Endothelial cell of umbilical vein (primary cell): ENCODE measurements at regions of chr1 and their contacts with region 1.

Region 1: DNA sequence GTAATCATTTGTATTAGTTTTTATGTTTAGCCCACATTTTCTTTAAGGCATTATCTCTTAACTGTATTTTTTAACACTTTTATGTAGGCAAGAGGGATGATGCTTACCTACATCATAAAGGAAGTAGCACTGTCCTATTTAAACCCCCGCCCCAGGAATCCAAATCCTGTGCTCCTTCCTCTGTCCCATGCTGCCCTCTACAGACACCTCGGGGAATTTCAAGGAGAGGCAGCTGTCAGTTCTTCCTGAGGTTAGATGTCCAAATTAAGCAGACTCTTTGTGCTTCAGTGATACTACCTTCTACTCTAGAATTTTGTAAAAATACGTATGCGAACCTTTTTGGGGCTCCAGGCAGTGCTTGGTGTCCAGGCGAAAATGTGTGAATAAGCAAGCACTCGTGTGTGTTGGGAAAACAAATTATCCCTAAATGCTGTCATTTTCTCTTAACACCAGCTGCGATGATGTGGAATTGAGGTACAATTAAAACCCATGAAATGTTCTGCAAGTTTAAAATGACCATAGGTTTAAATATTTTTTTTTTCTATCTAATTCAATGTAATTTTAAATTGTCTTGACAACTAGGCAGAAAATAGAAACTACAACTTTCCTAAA is 19.2 kb downstream of the CRCT1 start:
- DNase-seq: peak; percentile 36
- H3K4me3 ChIP-seq: no peak overlapping the region
- H3K27ac ChIP-seq: no peak overlapping the region
- H3K4me1 ChIP-seq: no peaks in the 10 kb centered on the region
- H3K27me3 ChIP-seq: no peaks in the 10 kb centered on the region
- CTCF ChIP-seq: peak; percentile 51 to 62
- POLR2A ChIP-seq: no peak

Region 2: GRCh38 chr1:152486400-152487006 is 46.9 kb before region 1 on chr1:
- CTCF ChIA-PET with region 1: interaction called, 40 read pairs
- POLR2A ChIA-PET with region 1: no interaction called
- dilution Hi-C with region 1: no loop called
- intact Hi-C with region 1: no loop called
- DNase-seq: no peak
- H3K4me3 ChIP-seq: no peak overlapping the region
- H3K27ac ChIP-seq: no peak overlapping the region
- H3K4me1 ChIP-seq: no peaks in the 10 kb centered on the region
- H3K27me3 ChIP-seq: no peaks in the 10 kb centered on the region
- CTCF ChIP-seq: peak; percentile 36 to 39
- POLR2A ChIP-seq: no peak

Region 3: GRCh38 chr1:152495066-152495675 is 38.3 kb before region 1 on chr1:
- CTCF ChIA-PET with region 1: interaction called, 181 read pairs
- POLR2A ChIA-PET with region 1: no interaction called
- dilution Hi-C with region 1: no loop called
- intact Hi-C with region 1: loop called (anchors 1 kb)
- DNase-seq: peak; percentile 21
- H3K4me3 ChIP-seq: no peak overlapping the region
- H3K27ac ChIP-seq: no peak overlapping the region
- H3K4me1 ChIP-seq: no peaks in the 10 kb centered on the region
- H3K27me3 ChIP-seq: no peaks in the 10 kb centered on the region
- CTCF ChIP-seq: peak; percentile 30 to 59
- POLR2A ChIP-seq: no peak

Region 4: DNA sequence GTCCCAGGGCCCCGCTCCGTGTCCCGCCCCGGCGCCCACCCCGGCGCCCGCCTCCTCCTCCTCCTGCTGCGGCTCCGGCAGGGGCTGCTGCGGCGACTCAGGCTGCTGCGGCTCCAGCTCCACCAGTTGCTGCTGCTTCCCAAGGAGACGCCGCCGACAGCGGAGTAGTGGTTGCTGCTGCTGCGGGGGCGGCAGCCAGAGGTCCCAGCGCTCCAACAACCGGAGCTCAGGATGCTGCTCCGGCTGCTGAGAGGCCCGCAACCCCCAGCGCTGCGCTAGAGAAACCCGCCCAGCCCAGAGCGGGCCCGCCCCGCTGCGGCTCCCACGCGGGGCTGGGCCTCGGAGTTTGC is 18.0 kb before region 1 on chr1:
- CTCF ChIA-PET with region 1: interaction called, 17 read pairs
- POLR2A ChIA-PET with region 1: no interaction called
- dilution Hi-C with region 1: no loop called
- intact Hi-C with region 1: no loop called
- DNase-seq: no peak
- H3K4me3 ChIP-seq: no peak overlapping the region
- H3K27ac ChIP-seq: no peak overlapping the region
- H3K4me1 ChIP-seq: peaks cover 4% of the 10 kb centered on the region
- H3K27me3 ChIP-seq: peaks cover 15 to 16% of the 10 kb centered on the region in 2 experiments
- CTCF ChIP-seq: no peak
- POLR2A ChIP-seq: no peak

Region 5: DNA sequence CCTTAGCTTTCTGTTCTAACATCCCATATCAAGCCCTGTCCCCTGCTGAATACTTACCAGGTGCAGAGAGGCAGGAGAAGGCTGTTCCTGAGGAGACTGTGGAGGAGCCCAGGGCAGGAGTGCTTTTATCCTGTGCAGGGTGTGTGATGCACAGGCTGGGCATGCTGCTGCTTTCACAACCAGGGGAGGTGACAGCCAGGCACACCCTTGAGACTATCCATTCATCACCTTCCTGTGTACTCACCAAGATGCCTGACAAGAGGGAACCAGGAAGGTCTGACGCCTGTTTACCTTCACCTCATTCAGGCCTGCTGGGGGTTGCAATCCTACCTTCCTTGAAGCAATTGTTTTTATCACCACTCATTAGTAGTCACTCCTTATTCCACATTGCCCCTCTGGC is 33.2 kb after region 1 on chr1 and contains the start of gene LCE3E:
- CTCF ChIA-PET with region 1: no interaction called
- POLR2A ChIA-PET with region 1: no interaction called
- dilution Hi-C with region 1: no loop called
- intact Hi-C with region 1: no loop called
- DNase-seq: no peak
- H3K4me3 ChIP-seq: no peak within 1 kb of the TSS
- H3K27ac ChIP-seq: no peak within 1 kb of the TSS
- H3K4me1 ChIP-seq: no peaks in the 10 kb centered on the region
- H3K27me3 ChIP-seq: no peaks in the 10 kb centered on the region
- CTCF ChIP-seq: no peak
- POLR2A ChIP-seq: no peak
- total RNA-seq, gene LCE3E: not detected in 2 replicates

Region 6: GRCh38 chr1:152582647-152583046 is 49.2 kb after region 1 on chr1:
- CTCF ChIA-PET with region 1: no interaction called
- POLR2A ChIA-PET with region 1: no interaction called
- dilution Hi-C with region 1: no loop called
- intact Hi-C with region 1: no loop called
- DNase-seq: no peak
- H3K4me3 ChIP-seq: no peak overlapping the region
- H3K27ac ChIP-seq: no peak overlapping the region
- H3K4me1 ChIP-seq: no peaks in the 10 kb centered on the region
- H3K27me3 ChIP-seq: no peaks in the 10 kb centered on the region
- CTCF ChIP-seq: no peak
- POLR2A ChIP-seq: no peak